ENCODE measurements at regions of chr12 and their contacts with region 1.

Region 1: GRCh38 chr12:119780786-119781434 is 96.2 kb downstream of the CIT start:
- DNase-seq: no peak
- ATAC-seq: no peak

Region 2: GRCh38 chr12:119667577-119668323 is 113.2 kb before region 1 on chr12 and contains the start of gene PRKAB1:
- intact Hi-C with region 1: loop called (anchors 10 kb)
- DNase-seq: peak; percentile 97
- ATAC-seq: peak; percentile 100
- total RNA-seq, gene PRKAB1: 9.3 TPM

Measured in Right ventricle myocardium superior (tissue), 1 donor.